Ovary (tissue), 10 donors: ENCODE measurements at regions of chr2 and their contacts with region 1.

Region 1: DNA sequence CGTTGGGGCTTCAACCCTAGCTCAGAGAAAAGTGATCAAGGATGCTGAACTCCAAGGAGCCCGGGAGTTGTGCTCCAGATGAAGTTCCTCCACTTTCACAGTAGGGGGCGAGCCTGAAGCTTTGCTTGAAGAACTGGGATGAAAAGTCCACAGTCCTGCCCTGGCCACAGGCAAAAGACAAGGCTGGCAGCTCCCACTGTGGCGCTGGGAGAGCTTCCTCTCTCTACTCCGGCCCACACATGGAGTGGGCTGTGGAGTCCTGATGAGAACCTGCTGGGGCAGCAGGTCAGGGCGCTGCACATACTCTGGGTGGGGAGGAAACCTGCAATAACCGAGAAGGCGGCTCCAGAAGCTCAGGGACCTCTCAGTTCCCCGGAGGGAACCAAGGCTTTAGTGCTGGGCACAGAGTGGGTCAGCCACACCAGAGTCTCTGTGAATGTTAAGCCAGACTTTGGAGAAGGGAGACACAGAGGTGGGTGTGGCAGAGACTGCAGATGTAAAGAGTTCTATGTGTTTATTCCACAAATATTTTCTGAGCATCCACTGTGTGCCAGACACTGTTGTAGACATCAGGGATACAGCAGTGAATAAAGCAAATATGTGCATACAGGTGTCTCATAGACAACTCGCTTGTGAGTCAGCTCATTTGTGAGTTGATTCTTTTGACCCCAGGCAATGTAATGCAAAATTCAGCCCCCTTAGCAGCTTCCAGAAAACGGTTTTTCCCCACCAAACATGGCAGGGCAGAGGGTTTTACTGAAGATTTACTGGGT is 48.0 kb upstream of the MRPL33 start:
- DNase-seq: peak; percentile 70 to 81 (median 75)
- H3K4me3 ChIP-seq: no peak overlapping the region
- H3K27ac ChIP-seq: peak overlapping the region; percentile 79 to 80
- H3K4me1 ChIP-seq: peaks cover 10% of the 10 kb centered on the region
- H3K27me3 ChIP-seq: peaks cover 2% of the 10 kb centered on the region
- CTCF ChIP-seq: peak; percentile 65 to 87 (median 84)
- EP300 ChIP-seq: no peak
- POLR2A ChIP-seq: no peak

Region 2: GRCh38 chr2:27754138-27754588 is 30.6 kb after region 1 on chr2:
- intact Hi-C with region 1: no loop called
- DNase-seq: peak; percentile 54 to 79 (median 68)
- H3K4me3 ChIP-seq: no peak overlapping the region
- H3K27ac ChIP-seq: no peak overlapping the region
- H3K4me1 ChIP-seq: no peaks in the 10 kb centered on the region
- H3K27me3 ChIP-seq: no peaks in the 10 kb centered on the region
- CTCF ChIP-seq: peak; percentile 13 to 52 (median 39)
- EP300 ChIP-seq: no peak
- POLR2A ChIP-seq: no peak

Region 3: DNA sequence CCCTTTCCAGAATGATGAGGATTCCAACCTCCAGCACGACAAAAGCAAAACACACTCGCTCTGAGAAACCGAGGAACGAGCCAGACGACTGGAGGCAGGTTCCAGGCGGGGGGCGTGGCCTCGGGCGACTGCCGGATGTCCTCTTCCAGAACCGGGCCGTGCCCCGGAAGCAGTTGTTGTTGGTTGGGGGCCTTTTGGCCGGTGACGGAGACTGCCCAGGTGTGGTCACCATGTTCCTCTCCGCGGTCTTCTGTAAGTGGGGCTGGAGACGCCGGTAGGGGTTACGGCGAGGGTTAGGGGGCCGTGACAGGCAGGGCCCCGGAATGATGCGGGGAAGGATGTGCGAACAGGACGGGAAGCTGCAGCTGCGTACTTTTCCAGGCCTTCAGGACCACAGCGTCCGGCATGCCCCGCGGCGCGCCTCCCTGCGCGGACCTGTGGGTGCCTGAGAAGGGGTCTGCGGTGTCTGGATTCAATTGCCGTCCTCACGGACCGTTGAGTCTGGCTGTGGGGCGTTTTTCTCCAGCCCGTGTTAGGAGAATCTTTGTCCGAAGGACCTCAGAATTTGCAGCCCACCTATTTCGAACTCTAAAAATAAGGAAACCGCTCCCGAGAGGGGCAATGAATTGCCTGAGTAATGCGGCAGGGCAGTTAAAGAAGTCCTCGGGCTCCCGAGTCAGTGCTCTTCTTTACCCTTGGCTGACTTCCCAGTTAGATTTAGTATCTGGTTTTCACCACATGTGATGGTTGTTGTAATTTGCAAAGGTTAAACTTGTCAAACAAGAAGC is 48.2 kb after region 1 on chr2 and contains the start of gene MRPL33:
- intact Hi-C with region 1: loop called in 1 of 4 experiments (anchors 10 kb)
- DNase-seq: peak; percentile 94 to 97 (median 95)
- H3K4me3 ChIP-seq: peak within 1 kb of the TSS; percentile 85
- H3K27ac ChIP-seq: peak within 1 kb of the TSS; percentile 69 to 70
- H3K4me1 ChIP-seq: peaks cover 7% of the 10 kb centered on the region
- H3K27me3 ChIP-seq: no peaks in the 10 kb centered on the region
- CTCF ChIP-seq: no peak
- EP300 ChIP-seq: no peak
- POLR2A ChIP-seq: peak; percentile 75
- total RNA-seq, gene MRPL33: 50.5 to 185 (median 62.4) TPM